IMR-90 (cell line): ENCODE measurements at regions of chr1 and their contacts with region 1.

Region 1: DNA sequence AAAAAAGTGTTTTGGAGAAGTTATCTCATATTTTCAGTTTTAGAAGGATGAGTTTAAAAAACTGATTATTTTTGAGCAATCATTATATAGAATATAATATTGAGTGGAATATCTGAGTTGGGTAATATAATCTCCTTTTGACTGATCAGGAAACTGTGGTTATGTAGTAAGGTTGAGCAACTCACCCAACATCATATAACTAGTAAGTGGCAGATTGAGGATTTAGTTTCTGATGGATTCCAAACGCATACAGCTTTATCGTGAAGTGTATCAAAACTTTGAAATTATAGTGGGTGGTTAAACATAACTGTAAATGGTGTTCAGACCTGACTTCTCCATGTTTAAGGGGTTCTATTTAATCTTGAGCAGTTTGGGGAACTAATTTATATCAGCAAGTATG is 98.6 kb downstream of the OLFM3 start:
- DNase-seq: no peak
- ATAC-seq: no peak
- H3K4me3 ChIP-seq: no peak overlapping the region
- H3K27ac ChIP-seq: no peak overlapping the region
- H3K4me1 ChIP-seq: no peaks in the 10 kb centered on the region
- H3K27me3 ChIP-seq: no peaks in the 10 kb centered on the region
- CTCF ChIP-seq: no peak
- POLR2A ChIP-seq: no peak
- RAD21 ChIP-seq: no peak

Region 2: DNA sequence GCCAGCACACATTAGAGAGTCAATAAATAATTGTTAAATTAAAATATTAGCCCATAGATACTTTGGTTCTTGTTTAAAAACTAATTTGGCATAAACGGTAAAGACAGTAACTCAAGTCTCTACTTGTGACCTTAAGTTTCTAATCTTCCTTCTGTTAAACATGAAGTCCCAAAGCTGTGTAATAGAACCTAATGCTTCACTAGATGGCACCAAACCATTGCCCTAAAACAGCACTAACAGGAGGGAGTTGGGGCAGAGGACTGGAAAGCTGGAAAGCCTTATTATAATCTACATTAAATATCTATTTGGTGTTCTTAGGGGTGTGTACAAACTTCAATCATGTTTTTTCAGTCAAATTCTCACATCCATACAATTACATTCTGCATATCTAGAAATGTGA is 78.1 kb before region 1 on chr1:
- CTCF ChIA-PET with region 1: no interaction called
- POLR2A ChIA-PET with region 1: no interaction called
- dilution Hi-C with region 1: no loop called
- in situ Hi-C with region 1: no loop called
- intact Hi-C with region 1: no loop called
- DNase-seq: peak; percentile 15
- ATAC-seq: no peak
- H3K4me3 ChIP-seq: no peak overlapping the region
- H3K27ac ChIP-seq: no peak overlapping the region
- H3K4me1 ChIP-seq: no peaks in the 10 kb centered on the region
- H3K27me3 ChIP-seq: no peaks in the 10 kb centered on the region
- CTCF ChIP-seq: peak; percentile 30; the same call in 1 of the 2 replicates
- POLR2A ChIP-seq: no peak
- RAD21 ChIP-seq: peak; percentile 37

Region 3: GRCh38 chr1:101915597-101915996 is 17.5 kb after region 1 on chr1:
- CTCF ChIA-PET with region 1: no interaction called
- POLR2A ChIA-PET with region 1: no interaction called
- dilution Hi-C with region 1: no loop called
- in situ Hi-C with region 1: no loop called
- intact Hi-C with region 1: no loop called
- DNase-seq: no peak
- ATAC-seq: no peak
- H3K4me3 ChIP-seq: no peak overlapping the region
- H3K27ac ChIP-seq: no peak overlapping the region
- H3K4me1 ChIP-seq: no peaks in the 10 kb centered on the region
- H3K27me3 ChIP-seq: no peaks in the 10 kb centered on the region
- CTCF ChIP-seq: no peak
- POLR2A ChIP-seq: no peak
- RAD21 ChIP-seq: no peak

Region 4: GRCh38 chr1:101971304-101971703 is 73.2 kb after region 1 on chr1:
- CTCF ChIA-PET with region 1: no interaction called
- POLR2A ChIA-PET with region 1: no interaction called
- dilution Hi-C with region 1: no loop called
- in situ Hi-C with region 1: no loop called
- intact Hi-C with region 1: loop called (anchors 5 kb)
- DNase-seq: peak; percentile 0
- ATAC-seq: no peak
- H3K4me3 ChIP-seq: no peak overlapping the region
- H3K27ac ChIP-seq: no peak overlapping the region
- H3K4me1 ChIP-seq: no peaks in the 10 kb centered on the region
- H3K27me3 ChIP-seq: no peaks in the 10 kb centered on the region
- CTCF ChIP-seq: no peak
- POLR2A ChIP-seq: no peak
- RAD21 ChIP-seq: no peak